CD4-positive, alpha-beta T cell (primary cell): ENCODE measurements at regions of chr15 and their contacts with region 1.

Region 1: GRCh38 chr15:66654739-66655375 is 47.2 kb upstream of the SMAD6 start:
- DNase-seq: peak in 6 of 14 experiments; percentile 20 to 64 (median 32)
- ATAC-seq: peak; percentile 71
- H3K4me3 ChIP-seq: no peak overlapping the region
- H3K4me3 Mint-ChIP-seq: peak overlapping the region; percentile 46
- H3K27ac ChIP-seq: no peak overlapping the region
- H3K27ac Mint-ChIP-seq: no peak overlapping the region
- H3K4me1 ChIP-seq: peaks cover 3% of the 10 kb centered on the region
- H3K4me1 Mint-ChIP-seq: peaks cover 7% of the 10 kb centered on the region
- H3K27me3 ChIP-seq: no peaks in the 10 kb centered on the region
- H3K27me3 Mint-ChIP-seq: peaks cover 21% of the 10 kb centered on the region
- CTCF ChIP-seq: no peak

Region 2: DNA sequence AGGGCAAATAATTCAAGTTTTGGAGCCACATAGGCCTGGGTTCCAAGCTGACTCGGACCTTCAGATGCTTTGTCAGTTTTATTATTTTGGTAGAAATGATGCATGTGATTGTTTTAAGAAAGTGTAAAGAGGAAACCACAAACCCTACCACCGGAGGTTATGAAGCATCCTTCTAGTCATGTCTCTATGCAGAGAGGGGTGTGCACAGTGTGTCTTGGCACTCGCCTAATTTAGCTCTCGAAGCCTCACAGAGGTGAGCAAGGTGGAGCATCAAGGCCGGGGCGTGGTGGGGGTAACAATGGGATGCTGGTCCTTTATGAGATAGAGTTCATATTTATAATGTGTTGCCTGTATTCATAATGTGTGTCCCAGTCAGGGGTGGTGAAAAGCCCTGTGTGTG is 16.5 kb before region 1 on chr15:
- CTCF ChIA-PET with region 1: no interaction called
- POLR2A ChIA-PET with region 1: no interaction called
- intact Hi-C with region 1: no loop called
- DNase-seq: peak in 3 of 14 experiments; percentile 14 to 36 (median 26)
- ATAC-seq: peak; percentile 52
- H3K4me3 ChIP-seq: no peak overlapping the region
- H3K4me3 Mint-ChIP-seq: no peak overlapping the region
- H3K27ac ChIP-seq: no peak overlapping the region
- H3K27ac Mint-ChIP-seq: no peak overlapping the region
- H3K4me1 ChIP-seq: peaks cover 13% of the 10 kb centered on the region
- H3K4me1 Mint-ChIP-seq: peaks cover 7% of the 10 kb centered on the region
- H3K27me3 ChIP-seq: no peaks in the 10 kb centered on the region
- H3K27me3 Mint-ChIP-seq: no peaks in the 10 kb centered on the region
- CTCF ChIP-seq: no peak

Region 3: DNA sequence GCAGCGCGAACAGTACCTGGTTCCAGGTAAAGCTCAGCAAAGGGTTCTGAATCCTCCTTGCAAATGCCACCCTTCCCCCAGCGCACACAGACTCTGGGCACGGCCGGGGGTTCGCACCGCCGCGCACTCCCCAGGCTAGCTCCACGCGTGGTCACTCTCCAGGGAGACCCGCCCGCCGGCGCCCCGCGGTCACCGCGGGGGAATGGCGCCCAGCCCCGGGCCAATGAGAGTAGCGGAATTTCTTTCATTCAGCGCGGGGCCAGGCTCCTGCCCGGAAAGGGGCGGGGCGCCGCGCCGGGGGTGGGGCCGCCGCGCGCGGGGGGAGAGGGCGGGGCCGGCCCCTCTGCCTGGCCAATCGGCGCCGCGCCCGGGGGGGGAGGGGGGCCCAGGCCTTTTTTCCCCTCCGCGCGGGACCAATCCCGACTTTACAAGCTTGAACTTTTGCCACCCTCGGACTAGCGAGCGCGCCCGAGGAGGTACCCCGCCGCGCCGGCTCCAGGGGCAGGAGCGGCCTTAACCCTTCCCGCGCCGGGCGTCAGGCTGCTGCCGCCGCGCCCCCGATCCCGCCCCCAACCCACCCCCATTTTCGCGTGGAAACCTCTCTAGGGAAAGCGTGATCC is 46.1 kb after region 1 on chr15:
- CTCF ChIA-PET with region 1: no interaction called
- POLR2A ChIA-PET with region 1: no interaction called
- intact Hi-C with region 1: loop called in 1 of 2 experiments (anchors 5 kb)
- DNase-seq: peak; percentile 64 to 91 (median 82)
- ATAC-seq: peak; percentile 76
- H3K4me3 ChIP-seq: peak overlapping the region; percentile 76
- H3K4me3 Mint-ChIP-seq: peak overlapping the region; percentile 90
- H3K27ac ChIP-seq: no peak overlapping the region
- H3K27ac Mint-ChIP-seq: peak overlapping the region; percentile 73
- H3K4me1 ChIP-seq: peaks cover 30% of the 10 kb centered on the region
- H3K4me1 Mint-ChIP-seq: peaks cover 23% of the 10 kb centered on the region
- H3K27me3 ChIP-seq: peaks cover 17 to 20% of the 10 kb centered on the region in 2 experiments
- H3K27me3 Mint-ChIP-seq: peaks cover 30% of the 10 kb centered on the region
- CTCF ChIP-seq: no peak